ENCODE measurements at regions of chrX and their contacts with region 1.

Region 1: DNA sequence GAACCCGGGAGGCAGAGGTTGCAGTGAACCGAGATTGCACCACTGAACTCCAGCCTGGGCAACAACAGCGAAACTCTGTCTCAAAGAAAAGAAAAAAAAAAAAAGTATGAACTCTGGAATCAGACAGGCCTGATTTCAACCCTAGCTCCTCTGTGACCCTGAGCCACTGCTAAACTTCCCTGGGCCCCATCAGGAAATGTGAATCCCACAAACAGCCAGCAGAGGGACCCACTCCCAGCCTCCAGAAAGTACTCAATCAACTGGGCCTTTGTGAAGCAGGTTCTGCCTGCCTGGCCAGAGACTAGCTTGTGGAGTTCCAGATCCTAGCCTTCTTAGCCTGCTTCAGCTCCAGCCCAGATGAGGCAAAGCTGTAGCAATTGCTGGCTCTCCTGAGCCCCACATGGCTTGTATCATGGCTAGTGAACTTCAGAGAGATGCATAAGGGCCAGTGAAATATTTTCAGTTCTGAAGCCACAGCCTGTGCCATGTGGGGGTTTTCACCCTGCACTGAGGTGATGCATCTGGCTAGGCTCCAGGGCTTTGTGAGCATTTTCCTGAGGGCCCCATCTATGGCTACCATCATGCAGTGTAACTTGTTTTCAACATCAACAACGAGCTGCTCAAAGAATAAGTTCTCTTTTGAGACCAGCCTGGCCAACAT is 7.2 kb upstream of the IDS start:
- DNase-seq: peak in 4 of 5 donors; percentile 31 to 53 (median 40)
- ATAC-seq: peak; percentile 59 to 77 (median 64)
- H3K4me3 ChIP-seq: no peak overlapping the region
- H3K27ac ChIP-seq: no peak overlapping the region
- H3K4me1 ChIP-seq: peaks cover 0 to 19% (median 0%) of the 10 kb centered on the region in 12 donors
- H3K27me3 ChIP-seq: peaks cover 0 to 9% (median 0%) of the 10 kb centered on the region in 9 donors
- CTCF ChIP-seq: peak; percentile 40 to 61 (median 50)
- POLR2A ChIP-seq: no peak

Region 2: GRCh38 chrX:149129767-149130166 is 382.6 kb before region 1 on chrX:
- intact Hi-C with region 1: no loop called
- DNase-seq: no peak
- ATAC-seq: no peak
- H3K4me3 ChIP-seq: no peak overlapping the region
- H3K27ac ChIP-seq: no peak overlapping the region
- H3K4me1 ChIP-seq: no peaks in the 10 kb centered on the region
- H3K27me3 ChIP-seq: no peaks in the 10 kb centered on the region
- CTCF ChIP-seq: no peak
- POLR2A ChIP-seq: no peak

Region 3: GRCh38 chrX:149877636-149878035 is 365.3 kb after region 1 on chrX:
- intact Hi-C with region 1: loop called in 1 of 10 experiments (anchors 5 kb)
- DNase-seq: no peak
- ATAC-seq: no peak
- H3K4me3 ChIP-seq: no peak overlapping the region
- H3K27ac ChIP-seq: no peak overlapping the region
- H3K4me1 ChIP-seq: no peaks in the 10 kb centered on the region
- H3K27me3 ChIP-seq: no peaks in the 10 kb centered on the region
- CTCF ChIP-seq: no peak
- POLR2A ChIP-seq: no peak